Activated naive CD4-positive, alpha-beta T cell treated with anti-CD3 and anti-CD28 coated beads for 36 hours (primary cell): ENCODE measurements at regions of chr18 and their contacts with region 1.

Region 1: GRCh38 chr18:22933206-22933957 is at the start of gene RBBP8:
- DNase-seq: peak; percentile 77
- H3K4me3 Mint-ChIP-seq: peak within 1 kb of the TSS; percentile 85
- H3K27ac Mint-ChIP-seq: peak within 1 kb of the TSS; percentile 93
- H3K4me1 Mint-ChIP-seq: peaks cover 14% of the 10 kb centered on the region
- H3K27me3 Mint-ChIP-seq: no peaks in the 10 kb centered on the region
- total RNA-seq, gene RBBP8: 77.7 to 83.7 TPM

Region 2: DNA sequence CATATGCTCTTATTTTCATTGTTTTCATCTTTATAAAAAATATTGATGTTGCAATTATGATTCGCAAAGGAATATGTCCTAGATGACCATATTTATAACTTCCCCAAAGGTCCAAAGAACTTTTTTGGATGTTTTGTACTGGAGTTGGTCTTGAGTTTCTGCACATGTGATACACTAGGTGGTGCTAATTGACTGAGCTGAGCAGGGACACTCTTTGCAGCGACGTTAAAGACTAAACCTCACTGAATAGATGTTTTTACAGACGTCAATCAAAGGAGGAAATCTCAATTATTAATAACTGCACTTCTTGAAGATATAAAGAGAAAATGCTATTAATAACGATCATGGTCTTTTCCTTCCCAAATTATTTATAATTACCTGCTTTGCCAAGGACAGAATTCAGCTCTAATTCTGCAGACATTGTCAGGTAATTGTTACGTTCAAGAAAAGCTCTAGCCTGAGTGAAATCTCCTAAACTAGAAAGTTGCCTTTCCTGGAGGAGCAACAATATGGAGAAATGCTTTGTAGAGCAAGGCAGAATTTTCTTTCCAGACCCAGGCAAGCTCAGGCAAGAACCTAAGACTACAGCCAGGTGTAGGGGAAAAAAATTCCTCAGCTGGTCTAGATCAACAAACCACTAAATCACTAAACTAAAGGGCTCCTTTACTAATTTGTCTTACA is 119.6 kb before region 1 on chr18:
- CTCF ChIA-PET with region 1: interaction called, 6 read pairs
- intact Hi-C with region 1: loop called (anchors 2 kb)
- DNase-seq: peak; percentile 35
- H3K4me3 Mint-ChIP-seq: no peak overlapping the region
- H3K27ac Mint-ChIP-seq: no peak overlapping the region
- H3K4me1 Mint-ChIP-seq: peaks cover 4% of the 10 kb centered on the region
- H3K27me3 Mint-ChIP-seq: peaks cover 17% of the 10 kb centered on the region

Region 3: GRCh38 chr18:22977847-22978701 is 44.7 kb after region 1 on chr18:
- CTCF ChIA-PET with region 1: interaction called, 13 read pairs
- intact Hi-C with region 1: loop called (anchors 1 kb)
- DNase-seq: peak; percentile 13
- H3K4me3 Mint-ChIP-seq: peak overlapping the region; percentile 29
- H3K27ac Mint-ChIP-seq: peak overlapping the region; percentile 83
- H3K4me1 Mint-ChIP-seq: peaks cover 20% of the 10 kb centered on the region
- H3K27me3 Mint-ChIP-seq: no peaks in the 10 kb centered on the region

Region 4: GRCh38 chr18:23131693-23132319 is 198.4 kb after region 1 on chr18:
- CTCF ChIA-PET with region 1: interaction called, 4 read pairs
- intact Hi-C with region 1: loop called (anchors 2 kb)
- DNase-seq: peak; percentile 75
- H3K4me3 Mint-ChIP-seq: no peak overlapping the region
- H3K27ac Mint-ChIP-seq: no peak overlapping the region
- H3K4me1 Mint-ChIP-seq: peaks cover 14% of the 10 kb centered on the region
- H3K27me3 Mint-ChIP-seq: peaks cover 28% of the 10 kb centered on the region

Region 5: DNA sequence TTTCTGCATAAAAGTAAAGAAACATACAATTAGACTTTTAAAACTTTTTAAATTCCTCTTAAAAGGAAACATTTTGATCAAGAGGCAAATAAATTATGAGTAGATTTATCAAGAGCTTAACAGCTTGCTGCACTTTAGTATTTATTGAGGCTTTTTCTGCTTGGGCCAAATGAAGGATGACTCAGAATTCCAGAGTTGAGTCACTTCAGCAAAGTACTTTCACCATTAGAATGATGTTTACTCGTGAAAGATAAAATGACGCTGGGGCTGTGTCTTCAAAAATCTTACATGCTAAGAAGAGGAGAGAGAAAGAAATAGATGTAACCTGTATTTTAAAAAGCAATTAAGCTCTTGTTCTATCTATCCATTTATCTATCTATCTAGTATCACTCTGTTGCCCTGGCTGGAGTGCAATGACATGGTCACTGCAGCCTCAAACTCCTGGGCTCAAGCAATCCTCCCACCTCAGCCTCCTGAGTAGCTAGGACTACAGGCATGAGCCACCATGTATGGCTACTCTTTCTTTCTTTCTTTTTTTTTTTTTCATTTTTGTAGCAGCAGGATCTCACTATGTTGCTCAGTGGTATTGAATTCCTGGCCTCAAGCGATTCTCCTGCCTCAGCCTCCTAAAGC is 444.4 kb after region 1 on chr18:
- CTCF ChIA-PET with region 1: interaction called, 5 read pairs
- intact Hi-C with region 1: loop called (anchors 1 kb)
- DNase-seq: peak; percentile 20
- H3K4me3 Mint-ChIP-seq: no peak overlapping the region
- H3K27ac Mint-ChIP-seq: peak overlapping the region; percentile 53
- H3K4me1 Mint-ChIP-seq: peaks cover 16% of the 10 kb centered on the region
- H3K27me3 Mint-ChIP-seq: no peaks in the 10 kb centered on the region